MCF 10A (cell line): ENCODE measurements at regions of chr20 and their contacts with region 1.

Region 1: DNA sequence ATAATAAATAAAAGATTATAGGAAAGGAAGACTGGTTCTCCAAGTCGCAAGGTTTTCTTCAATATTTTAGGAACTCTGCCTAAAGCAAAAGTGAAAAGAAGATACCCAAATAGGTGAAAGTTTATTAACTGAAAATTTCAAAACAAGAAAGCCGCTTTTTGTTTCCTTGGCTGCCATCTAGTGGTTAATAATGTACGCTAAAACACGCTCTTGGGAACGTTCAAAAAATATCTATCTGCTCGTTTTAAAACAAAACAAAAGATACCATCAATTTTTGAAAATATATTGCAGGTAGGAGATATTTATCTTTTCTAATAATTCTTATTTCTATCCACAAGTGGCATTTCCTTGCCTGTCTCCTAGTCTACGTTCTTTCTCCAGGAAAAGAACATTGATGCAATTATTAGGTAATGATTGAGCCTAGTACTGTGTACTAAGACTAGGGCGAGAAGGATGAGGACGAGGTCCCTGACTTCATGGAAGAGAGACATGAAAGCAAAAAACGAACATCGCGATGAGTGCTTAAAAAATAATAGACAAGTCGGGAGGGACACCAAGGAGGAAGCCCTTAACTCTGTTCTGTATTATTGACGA is 97.2 kb downstream of the SPTLC3 start:
- DNase-seq: peak; percentile 51
- H3K4me3 Mint-ChIP-seq: no peak overlapping the region
- H3K27ac Mint-ChIP-seq: no peak overlapping the region
- H3K4me1 Mint-ChIP-seq: peaks cover 11% of the 10 kb centered on the region
- H3K27me3 Mint-ChIP-seq: no peaks in the 10 kb centered on the region
- CTCF ChIP-seq: peak; percentile 66

Region 2: GRCh38 chr20:12977328-12978125 is 128.4 kb before region 1 on chr20:
- CTCF ChIA-PET with region 1: interaction called, 304 read pairs
- POLR2A ChIA-PET with region 1: interaction called, 6 read pairs
- intact Hi-C with region 1: no loop called
- DNase-seq: peak; percentile 8
- H3K4me3 Mint-ChIP-seq: no peak overlapping the region
- H3K27ac Mint-ChIP-seq: peak overlapping the region; percentile 6
- H3K4me1 Mint-ChIP-seq: peaks cover 8% of the 10 kb centered on the region
- H3K27me3 Mint-ChIP-seq: no peaks in the 10 kb centered on the region
- CTCF ChIP-seq: no peak

Region 3: DNA sequence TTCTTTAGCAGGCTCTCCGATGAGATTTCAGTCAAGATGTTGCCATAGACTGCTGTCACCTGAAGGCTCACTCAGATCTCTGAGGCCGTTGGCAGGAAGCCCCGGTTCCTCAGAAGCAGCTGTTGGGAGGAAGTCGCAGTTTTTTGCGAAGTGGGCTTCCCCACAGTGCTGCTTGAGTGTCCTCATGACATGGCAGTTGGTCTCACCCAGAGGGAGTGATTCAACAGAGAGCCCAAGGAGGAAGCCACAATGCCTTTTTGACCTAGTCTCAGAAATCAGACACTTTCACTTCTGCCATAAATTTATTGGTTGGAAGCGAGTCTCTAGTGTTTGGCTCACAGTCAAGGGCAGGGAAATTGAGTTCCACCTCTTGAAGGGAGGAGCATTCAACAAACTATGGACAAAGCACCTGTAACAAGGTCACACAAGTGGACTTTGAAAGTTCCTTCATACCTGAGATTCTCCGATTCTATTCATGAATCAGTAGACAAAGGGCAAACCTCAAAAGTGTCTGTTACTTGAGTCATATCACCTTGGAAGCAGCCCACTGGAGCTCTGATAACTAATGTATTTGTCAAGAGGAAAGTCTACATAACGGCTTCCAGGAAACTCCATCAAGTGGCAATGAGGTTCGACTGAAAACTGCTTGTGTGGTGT is 324.5 kb after region 1 on chr20:
- CTCF ChIA-PET with region 1: no interaction called
- POLR2A ChIA-PET with region 1: no interaction called
- intact Hi-C with region 1: no loop called
- DNase-seq: no peak
- H3K4me3 Mint-ChIP-seq: no peak overlapping the region
- H3K27ac Mint-ChIP-seq: no peak overlapping the region
- H3K4me1 Mint-ChIP-seq: no peaks in the 10 kb centered on the region
- H3K27me3 Mint-ChIP-seq: no peaks in the 10 kb centered on the region
- CTCF ChIP-seq: no peak

Region 4: GRCh38 chr20:14523090-14523489 is 1417.1 kb after region 1 on chr20:
- CTCF ChIA-PET with region 1: no interaction called
- POLR2A ChIA-PET with region 1: no interaction called
- intact Hi-C with region 1: no loop called
- DNase-seq: no peak
- H3K4me3 Mint-ChIP-seq: no peak overlapping the region
- H3K27ac Mint-ChIP-seq: peak overlapping the region; percentile 40
- H3K4me1 Mint-ChIP-seq: peaks cover 17% of the 10 kb centered on the region
- H3K27me3 Mint-ChIP-seq: no peaks in the 10 kb centered on the region
- CTCF ChIP-seq: no peak